ENCODE measurements at regions of chr11 and their contacts with region 1.

Region 1: DNA sequence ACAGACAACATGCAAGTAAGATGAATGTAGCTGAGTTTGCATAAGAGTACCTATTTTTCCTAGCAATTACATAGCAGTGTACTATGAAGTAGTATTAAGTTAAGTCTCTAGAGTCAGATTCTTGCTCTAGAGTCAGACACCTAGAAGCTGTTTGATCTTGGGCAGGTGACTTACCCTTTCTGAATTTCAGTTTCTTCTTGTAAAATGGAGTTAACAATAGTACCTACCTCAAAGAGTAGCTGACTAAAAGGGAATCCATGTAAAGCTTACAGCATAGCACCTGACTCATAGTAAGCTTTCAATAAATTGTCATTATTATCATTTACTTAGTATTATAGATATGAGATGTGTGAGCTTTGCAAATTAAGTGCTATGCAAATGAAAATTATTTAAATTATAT is 47.8 kb upstream of the PTPRJ start:
- DNase-seq: no peak
- ATAC-seq: no peak
- H3K4me3 Mint-ChIP-seq: no peak overlapping the region
- H3K27ac Mint-ChIP-seq: no peak overlapping the region
- H3K4me1 Mint-ChIP-seq: peaks cover 22% of the 10 kb centered on the region
- H3K27me3 Mint-ChIP-seq: no peaks in the 10 kb centered on the region

Region 2: GRCh38 chr11:47955061-47955755 is 22.7 kb after region 1 on chr11:
- CTCF ChIA-PET with region 1: interaction called, 18 read pairs
- POLR2A ChIA-PET with region 1: no interaction called
- DNase-seq: no peak
- ATAC-seq: peak; percentile 28
- H3K4me3 Mint-ChIP-seq: no peak overlapping the region
- H3K27ac Mint-ChIP-seq: peak overlapping the region; percentile 39
- H3K4me1 Mint-ChIP-seq: peaks cover 25% of the 10 kb centered on the region
- H3K27me3 Mint-ChIP-seq: no peaks in the 10 kb centered on the region

Region 3: GRCh38 chr11:47981050-47981621 is 48.6 kb after region 1 on chr11:
- CTCF ChIA-PET with region 1: interaction called, 12 read pairs
- POLR2A ChIA-PET with region 1: no interaction called
- DNase-seq: no peak
- ATAC-seq: peak; percentile 54
- H3K4me3 Mint-ChIP-seq: peak overlapping the region; percentile 98
- H3K27ac Mint-ChIP-seq: no peak overlapping the region
- H3K4me1 Mint-ChIP-seq: peaks cover 33% of the 10 kb centered on the region
- H3K27me3 Mint-ChIP-seq: peaks cover 18% of the 10 kb centered on the region

Region 4: DNA sequence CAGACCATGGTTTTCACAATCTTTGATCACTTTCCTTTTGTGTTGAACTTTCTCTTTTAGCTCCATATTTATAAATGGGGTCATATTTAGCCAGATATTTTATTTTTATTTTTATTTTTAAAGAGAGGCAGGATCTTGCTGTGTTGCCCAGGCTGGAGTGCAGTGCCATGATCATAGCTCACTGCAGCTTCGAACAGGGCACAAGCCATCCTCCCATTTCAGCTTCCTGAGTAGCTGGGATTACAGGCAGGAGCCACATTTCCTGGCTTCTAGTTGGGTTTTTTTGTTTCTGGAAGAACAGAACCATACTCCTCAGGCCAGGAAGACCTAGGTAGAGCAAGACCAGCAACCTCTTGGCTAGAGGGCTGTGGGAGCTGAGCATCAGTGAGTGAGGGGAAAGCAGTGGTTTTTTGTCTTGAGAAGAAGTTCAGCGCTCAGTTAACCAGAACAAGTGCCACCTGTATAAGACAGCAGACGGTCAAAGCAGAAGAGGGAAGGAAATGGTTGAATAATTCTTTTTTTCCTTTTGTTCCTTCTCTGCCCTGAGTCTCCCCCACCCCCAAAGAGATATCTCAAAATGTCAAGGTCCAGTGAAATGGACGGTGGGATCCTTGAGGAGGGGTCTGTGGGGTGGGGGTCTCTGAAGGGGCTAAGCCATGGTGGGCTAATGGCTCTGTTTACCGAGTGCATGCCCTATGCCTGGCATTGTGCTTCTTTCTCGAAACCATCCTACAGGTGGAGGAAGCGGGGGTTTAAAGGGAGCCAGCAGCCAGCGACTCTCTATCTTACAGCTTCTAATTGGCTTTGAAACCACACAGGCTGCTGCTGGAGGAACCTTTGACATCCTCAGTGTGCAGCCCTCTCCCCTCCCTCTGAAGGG is 110.8 kb after region 1 on chr11:
- CTCF ChIA-PET with region 1: interaction called, 12 read pairs
- POLR2A ChIA-PET with region 1: no interaction called
- DNase-seq: peak; percentile 50
- ATAC-seq: peak; percentile 78
- H3K4me3 Mint-ChIP-seq: peak overlapping the region; percentile 31
- H3K27ac Mint-ChIP-seq: peak overlapping the region; percentile 84
- H3K4me1 Mint-ChIP-seq: peaks cover 64% of the 10 kb centered on the region
- H3K27me3 Mint-ChIP-seq: no peaks in the 10 kb centered on the region